ENCODE measurements at regions of chr17 and their contacts with region 1.

Region 1: DNA sequence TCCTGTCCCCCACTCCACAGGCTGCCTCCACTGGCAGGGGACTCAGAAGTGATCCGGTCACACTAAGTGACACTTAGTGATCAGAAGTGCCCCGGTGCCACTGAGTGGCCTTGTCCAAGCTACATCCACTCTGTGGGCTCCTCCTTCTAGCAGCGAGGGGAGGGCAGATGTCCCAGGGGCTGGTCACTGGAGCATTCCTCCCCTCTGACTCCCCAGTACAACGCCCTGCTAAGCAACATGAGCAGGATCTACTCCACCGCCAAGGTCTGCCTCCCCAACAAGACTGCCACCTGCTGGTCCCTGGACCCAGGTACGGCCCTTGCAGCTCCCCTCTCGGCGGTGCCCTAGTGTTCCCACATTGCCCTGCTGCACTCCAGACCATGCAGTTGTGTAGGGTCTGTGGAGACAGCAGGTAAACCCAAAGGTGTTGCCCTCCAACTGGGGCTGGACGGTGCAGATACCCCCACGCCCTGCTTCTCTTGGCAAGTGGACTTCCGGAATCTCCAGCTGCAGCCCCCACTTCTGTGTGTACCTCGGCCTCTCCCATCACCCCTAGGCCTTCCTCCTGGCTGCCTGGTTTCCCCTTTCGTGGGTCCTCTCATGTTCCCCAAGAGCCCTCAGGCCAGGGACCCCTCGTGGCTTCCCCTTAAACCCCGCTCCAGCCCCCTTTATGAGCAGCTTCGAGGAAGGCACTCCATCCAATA is 2.1 kb downstream of the ACE start:
- DNase-seq: peak; percentile 68
- H3K4me3 Mint-ChIP-seq: peak overlapping the region; percentile 67
- H3K27ac Mint-ChIP-seq: no peak overlapping the region
- H3K4me1 Mint-ChIP-seq: peaks cover 14% of the 10 kb centered on the region
- H3K27me3 Mint-ChIP-seq: peaks cover 36% of the 10 kb centered on the region

Region 2: DNA sequence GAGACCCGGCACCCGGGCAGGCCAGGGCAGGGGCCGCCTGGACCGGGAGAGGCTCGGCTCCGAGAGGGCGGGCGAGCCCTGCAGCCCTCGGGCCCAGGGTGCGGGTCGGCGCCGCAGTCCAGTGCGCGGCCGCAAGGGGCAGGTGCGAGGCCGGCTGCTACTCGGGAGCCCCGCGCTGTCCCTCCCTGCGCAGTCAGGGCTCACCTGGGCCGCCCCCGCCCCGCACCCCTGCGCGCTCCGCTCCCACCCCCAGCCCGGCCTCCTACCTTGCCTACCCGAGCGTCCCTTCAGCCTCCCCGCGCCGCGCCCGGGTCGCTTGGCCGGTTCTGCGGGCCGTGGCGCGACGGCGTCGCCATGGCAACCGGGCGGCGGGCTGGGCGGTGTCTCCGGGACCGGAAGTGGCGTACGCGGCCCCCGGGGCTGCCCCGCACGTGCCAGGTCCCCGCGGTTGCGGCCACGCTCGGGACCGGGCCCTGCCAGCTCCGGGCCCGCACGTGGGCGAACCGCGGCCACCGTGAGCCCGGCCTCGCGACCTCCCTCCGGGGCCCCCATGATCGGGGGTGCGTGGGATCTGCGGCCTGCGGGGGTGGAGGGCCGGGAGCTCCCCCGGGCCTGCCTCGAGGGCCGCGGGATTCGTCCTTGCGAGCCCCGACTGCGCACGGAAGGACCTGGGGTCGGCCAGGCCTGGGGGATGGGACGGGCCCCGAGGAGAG is 32.8 kb before region 1 on chr17 and contains the start of gene CYB561:
- intact Hi-C with region 1: loop called (anchors 2 kb)
- DNase-seq: peak; percentile 64
- H3K4me3 Mint-ChIP-seq: peak within 1 kb of the TSS; percentile 76
- H3K27ac Mint-ChIP-seq: peak within 1 kb of the TSS; percentile 64
- H3K4me1 Mint-ChIP-seq: peaks cover 19% of the 10 kb centered on the region
- H3K27me3 Mint-ChIP-seq: peaks cover 11% of the 10 kb centered on the region
- total RNA-seq, gene CYB561: 1.9 and 2.9 TPM in 2 replicates

Region 3: GRCh38 chr17:63600569-63601438 is 121.9 kb after region 1 on chr17 and contains the start of gene TACO1:
- intact Hi-C with region 1: no loop called
- DNase-seq: peak; percentile 75
- H3K4me3 Mint-ChIP-seq: peak within 1 kb of the TSS; percentile 99
- H3K27ac Mint-ChIP-seq: peak within 1 kb of the TSS; percentile 94
- H3K4me1 Mint-ChIP-seq: peaks cover 26% of the 10 kb centered on the region
- H3K27me3 Mint-ChIP-seq: no peaks in the 10 kb centered on the region
- total RNA-seq, gene TACO1: 30.8 and 32.0 TPM in 2 replicates

Region 4: DNA sequence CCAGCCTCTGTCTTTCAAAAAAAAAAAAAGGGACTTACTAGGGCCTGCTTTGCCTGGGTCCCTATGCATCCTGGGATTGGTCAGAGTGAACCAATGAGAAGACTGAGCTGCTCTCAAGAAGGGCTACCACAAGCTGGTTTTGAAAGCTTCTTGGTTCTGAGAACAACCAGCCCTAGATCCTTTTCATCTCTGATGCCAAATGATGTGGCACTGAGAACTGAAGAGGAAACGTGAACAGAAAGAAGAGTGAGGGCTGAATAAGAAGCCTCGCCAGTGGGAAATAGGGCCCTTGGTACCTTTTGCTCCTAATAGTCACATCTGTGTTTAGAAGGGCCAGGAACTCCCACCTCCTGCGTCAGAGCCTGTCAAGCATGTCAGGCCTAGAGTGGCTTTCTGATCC is 132.4 kb after region 1 on chr17:
- intact Hi-C with region 1: loop called (anchors 1 kb)
- DNase-seq: peak; percentile 11
- H3K4me3 Mint-ChIP-seq: peak overlapping the region; percentile 77
- H3K27ac Mint-ChIP-seq: peak overlapping the region; percentile 98
- H3K4me1 Mint-ChIP-seq: peaks cover 30% of the 10 kb centered on the region
- H3K27me3 Mint-ChIP-seq: no peaks in the 10 kb centered on the region

Measured in activated T-helper 1 cell treated with anti-CD3 and anti-CD28 coated beads, Interleukin-12 subunit alpha, Interleukin-12 subunit beta, Interleukin-2, Interleukin-4 antibody, amounts not matched to agents 30 ng/mL and 10 ng/mL and 1 ng/mL, durations not matched to agents 14 hours and 24 hours and 36 hours (primary cell).